Activated T-helper 1 cell treated with anti-CD3 and anti-CD28 coated beads, Interleukin-12 subunit alpha, Interleukin-12 subunit beta, Interleukin-2, Interleukin-4 antibody, amounts not matched to agents 30 ng/mL and 10 ng/mL and 1 ng/mL, durations not matched to agents 14 hours and 24 hours and 36 hours (primary cell): ENCODE measurements at regions of chr5 and their contacts with region 1.

Region 1: DNA sequence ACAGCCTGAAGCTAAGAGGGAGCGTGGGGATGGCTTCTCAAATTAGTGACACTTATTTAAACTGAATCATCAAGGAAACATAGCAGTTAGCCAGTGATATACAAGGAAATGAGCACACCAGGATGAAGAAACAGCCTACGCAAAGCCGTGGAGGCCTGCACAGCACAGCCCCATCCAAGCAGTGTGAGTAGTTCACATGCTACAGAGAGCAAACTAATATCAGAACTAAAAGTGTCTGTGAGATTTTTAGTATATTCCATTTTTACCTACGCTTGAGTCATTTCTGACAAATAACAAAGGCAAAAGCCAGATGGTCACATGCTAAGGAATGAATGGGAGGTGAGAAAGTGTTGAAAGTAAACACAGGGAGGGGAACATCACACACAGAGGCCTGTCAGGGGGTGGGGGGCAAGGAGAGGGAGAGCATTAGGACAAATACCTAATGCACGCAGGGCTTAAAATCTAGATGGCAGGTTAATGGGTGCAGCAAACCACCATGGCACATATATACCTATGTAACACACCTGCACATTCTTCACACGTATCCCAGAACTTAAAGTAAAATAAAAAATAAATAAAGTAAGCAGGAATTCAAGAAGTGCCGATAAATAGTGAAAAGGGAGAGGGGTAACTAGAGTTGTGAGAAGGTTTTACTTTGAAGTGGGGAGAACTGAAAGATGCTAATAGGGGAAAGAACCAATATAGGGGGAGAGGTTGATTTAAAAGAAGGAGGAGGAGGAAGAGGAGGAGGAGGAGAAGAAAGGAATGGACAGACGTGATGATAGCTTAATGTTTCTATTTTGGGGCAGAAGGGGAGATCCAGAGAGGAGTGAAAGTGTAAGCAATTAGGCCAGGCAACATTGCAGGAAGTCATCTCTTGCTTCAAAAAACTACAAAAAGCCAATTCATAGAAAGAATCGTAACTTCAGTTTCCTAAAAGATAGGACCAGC is 100.9 kb upstream of the PTGER4 start:
- DNase-seq: peak; percentile 40
- H3K4me3 Mint-ChIP-seq: peak overlapping the region; percentile 68
- H3K27ac Mint-ChIP-seq: peak overlapping the region; percentile 92
- H3K4me1 Mint-ChIP-seq: peaks cover 42% of the 10 kb centered on the region
- H3K27me3 Mint-ChIP-seq: no peaks in the 10 kb centered on the region

Region 2: GRCh38 chr5:39080597-39081204 is 1498.1 kb before region 1 on chr5:
- intact Hi-C with region 1: loop called (anchors 5 kb)
- DNase-seq: no peak
- H3K4me3 Mint-ChIP-seq: no peak overlapping the region
- H3K27ac Mint-ChIP-seq: no peak overlapping the region
- H3K4me1 Mint-ChIP-seq: peaks cover 30% of the 10 kb centered on the region
- H3K27me3 Mint-ChIP-seq: peaks cover 20% of the 10 kb centered on the region

Region 3: DNA sequence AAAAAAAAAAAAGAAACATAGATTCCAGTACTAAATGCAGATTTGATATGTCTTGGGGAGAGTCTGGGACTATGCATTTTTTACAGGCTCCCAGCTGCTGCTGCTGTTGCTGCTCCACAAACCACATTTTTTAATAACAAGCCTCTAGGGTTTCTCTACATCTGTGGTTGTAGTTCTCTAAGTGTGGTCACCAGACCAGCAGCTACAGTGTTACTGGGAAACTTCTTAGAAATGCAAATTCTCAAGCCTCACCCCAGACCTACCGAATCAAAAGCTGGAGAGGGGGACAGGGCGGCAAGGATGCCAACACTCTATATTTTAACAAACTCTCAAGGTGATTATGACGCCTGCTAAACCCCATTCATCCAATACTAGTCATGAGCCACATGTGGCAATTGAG is 192.5 kb before region 1 on chr5:
- intact Hi-C with region 1: loop called (anchors 1 kb)
- DNase-seq: peak; percentile 19
- H3K4me3 Mint-ChIP-seq: no peak overlapping the region
- H3K27ac Mint-ChIP-seq: peak overlapping the region; percentile 19
- H3K4me1 Mint-ChIP-seq: peaks cover 88% of the 10 kb centered on the region
- H3K27me3 Mint-ChIP-seq: no peaks in the 10 kb centered on the region

Region 4: DNA sequence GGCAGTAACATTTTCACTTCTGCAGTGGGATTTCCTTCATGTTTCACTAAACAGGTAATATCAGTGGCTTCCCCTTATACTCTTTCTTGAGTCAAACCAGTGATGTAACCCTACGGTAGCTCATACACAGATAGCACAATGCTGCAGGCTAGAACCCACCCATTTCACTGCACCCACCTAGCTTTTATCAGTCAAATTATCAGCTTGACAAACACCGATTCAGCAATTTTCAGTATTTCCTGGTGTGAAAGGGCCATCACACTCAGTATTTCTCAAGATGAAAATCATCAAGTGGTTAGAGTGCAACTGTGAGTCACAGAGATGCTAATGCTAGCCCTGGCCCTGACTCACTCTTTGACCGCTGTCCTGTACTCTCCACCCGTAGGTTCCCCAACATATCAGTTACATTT is 141.3 kb before region 1 on chr5:
- intact Hi-C with region 1: loop called (anchors 1 kb)
- DNase-seq: no peak
- H3K4me3 Mint-ChIP-seq: peak overlapping the region; percentile 13
- H3K27ac Mint-ChIP-seq: peak overlapping the region; percentile 71
- H3K4me1 Mint-ChIP-seq: peaks cover 84% of the 10 kb centered on the region
- H3K27me3 Mint-ChIP-seq: no peaks in the 10 kb centered on the region

Region 5: DNA sequence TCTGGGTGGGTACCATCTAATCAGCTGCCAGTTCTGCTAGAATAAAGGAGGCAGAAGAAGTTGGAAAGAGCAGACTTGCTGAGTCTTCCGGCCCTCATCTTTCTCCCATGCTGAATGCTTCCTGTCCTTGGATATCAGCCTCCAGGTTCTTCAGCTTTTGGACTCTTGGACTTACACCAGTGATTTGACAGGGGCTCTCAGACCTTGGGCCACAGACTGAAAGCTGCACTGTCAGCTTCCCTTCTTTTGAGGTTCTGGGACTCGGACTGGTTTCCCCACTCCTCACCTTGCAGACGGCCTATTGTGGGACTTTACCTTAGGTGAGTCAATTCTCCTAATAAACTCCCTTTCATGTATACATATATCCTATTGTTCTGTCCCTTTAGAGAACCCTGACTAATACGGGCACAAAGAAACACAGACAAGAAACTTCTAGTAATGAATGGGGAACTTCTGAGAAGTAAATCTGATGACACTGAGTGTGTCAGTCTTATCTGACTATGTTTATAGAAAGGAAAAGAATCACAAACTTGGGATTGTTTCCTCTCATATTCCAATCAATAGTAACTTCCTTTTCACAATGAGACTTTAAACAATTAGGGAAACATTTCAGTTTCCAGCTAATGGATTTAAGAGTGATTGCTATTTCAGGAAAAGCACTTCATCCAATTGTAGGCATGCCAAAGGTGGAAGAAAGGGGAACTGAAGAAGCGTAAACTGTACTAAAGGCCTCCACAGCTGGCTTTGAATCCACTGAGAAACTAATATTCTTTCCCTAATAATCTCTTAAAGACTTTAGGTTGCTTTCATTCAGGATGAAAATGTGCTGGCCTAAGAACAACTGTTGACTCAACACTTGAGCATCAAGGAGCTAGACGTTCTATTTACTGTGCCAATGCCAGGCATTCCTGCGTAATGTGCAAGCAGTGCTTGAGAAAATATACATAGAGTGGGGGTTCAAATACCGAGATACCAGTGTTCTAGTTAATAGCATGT is 27.0 kb before region 1 on chr5:
- intact Hi-C with region 1: no loop called
- DNase-seq: no peak
- H3K4me3 Mint-ChIP-seq: no peak overlapping the region
- H3K27ac Mint-ChIP-seq: no peak overlapping the region
- H3K4me1 Mint-ChIP-seq: peaks cover 15% of the 10 kb centered on the region
- H3K27me3 Mint-ChIP-seq: no peaks in the 10 kb centered on the region

Region 6: DNA sequence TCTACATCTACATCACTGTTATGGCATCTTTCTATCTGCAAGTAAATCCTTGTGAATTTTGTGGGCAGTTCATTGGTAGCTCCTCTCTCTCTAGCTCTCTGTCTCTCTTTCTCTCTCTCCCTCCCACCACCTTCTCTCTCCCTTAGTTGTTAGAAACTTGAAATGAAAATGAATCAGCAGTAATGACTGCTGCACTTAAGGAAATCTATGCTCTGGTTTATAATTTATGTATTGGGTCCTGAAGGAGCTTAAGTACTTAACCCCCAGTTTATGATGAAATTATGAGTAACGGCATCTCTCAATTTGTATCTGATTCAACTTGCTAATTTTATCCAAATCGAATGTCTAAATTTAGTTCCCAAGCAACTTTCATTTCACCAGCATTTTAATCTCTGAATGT is 48.9 kb after region 1 on chr5:
- intact Hi-C with region 1: no loop called
- DNase-seq: no peak
- H3K4me3 Mint-ChIP-seq: no peak overlapping the region
- H3K27ac Mint-ChIP-seq: no peak overlapping the region
- H3K4me1 Mint-ChIP-seq: peaks cover 19% of the 10 kb centered on the region
- H3K27me3 Mint-ChIP-seq: peaks cover 1% of the 10 kb centered on the region

Region 7: GRCh38 chr5:40653221-40654022 is 74.6 kb after region 1 on chr5:
- intact Hi-C with region 1: loop called (anchors 1 kb)
- DNase-seq: no peak
- H3K4me3 Mint-ChIP-seq: peak overlapping the region; percentile 85
- H3K27ac Mint-ChIP-seq: peak overlapping the region; percentile 95
- H3K4me1 Mint-ChIP-seq: peaks cover 93% of the 10 kb centered on the region
- H3K27me3 Mint-ChIP-seq: no peaks in the 10 kb centered on the region

Region 8: DNA sequence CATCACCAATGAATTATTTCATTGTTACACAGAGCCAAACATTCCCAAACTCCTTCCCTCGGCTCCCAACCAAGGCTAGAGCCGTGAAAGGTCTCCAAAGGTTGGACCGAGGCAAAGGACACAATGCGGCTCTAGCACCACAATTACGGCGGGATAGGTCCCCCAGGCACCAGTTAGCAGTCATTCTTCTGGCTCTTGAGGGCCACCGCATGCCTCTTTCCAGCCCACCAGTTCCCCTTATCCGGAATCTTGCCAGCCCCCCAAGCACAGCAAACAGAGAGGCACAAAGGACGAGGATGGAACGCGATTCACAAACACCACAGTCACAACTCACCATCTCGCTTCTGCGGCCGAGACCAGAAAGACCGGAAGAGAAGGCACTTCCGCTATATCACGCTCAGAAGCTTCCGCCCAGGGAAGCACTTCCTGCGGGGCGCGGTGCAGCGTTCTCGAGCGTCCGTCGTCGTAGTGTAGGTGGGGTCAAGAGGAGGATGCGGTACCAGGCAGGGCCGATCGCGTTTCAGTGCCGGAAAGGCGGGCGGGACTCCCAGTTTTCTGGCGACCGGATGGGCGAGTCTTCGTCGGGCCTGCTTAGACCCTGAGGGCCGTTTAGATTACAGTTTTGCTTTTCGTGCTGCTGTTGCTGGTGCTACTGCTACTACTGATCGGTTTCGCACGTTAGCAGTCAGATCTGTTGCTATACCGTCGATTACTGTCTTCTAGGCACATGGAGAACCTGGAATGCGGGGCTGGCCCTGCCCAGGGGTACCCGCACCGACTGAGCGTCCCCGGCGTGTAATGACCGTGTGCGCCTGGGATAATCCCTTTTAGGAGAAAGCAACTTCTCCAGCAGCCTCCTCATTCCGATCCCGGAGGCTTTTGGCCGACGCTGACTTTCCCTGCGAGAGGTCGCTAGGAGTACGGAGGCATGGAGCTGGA is 256.3 kb after region 1 on chr5 and contains the start of gene RPL37:
- intact Hi-C with region 1: loop called (anchors 5 kb)
- DNase-seq: peak; percentile 89
- H3K4me3 Mint-ChIP-seq: peak within 1 kb of the TSS; percentile 95
- H3K27ac Mint-ChIP-seq: peak within 1 kb of the TSS; percentile 90
- H3K4me1 Mint-ChIP-seq: peaks cover 45% of the 10 kb centered on the region
- H3K27me3 Mint-ChIP-seq: no peaks in the 10 kb centered on the region
- total RNA-seq, gene RPL37: 1,451 and 1,473 TPM in 2 replicates